ENCODE measurements at regions of chr10 and their contacts with region 1.

Region 1: DNA sequence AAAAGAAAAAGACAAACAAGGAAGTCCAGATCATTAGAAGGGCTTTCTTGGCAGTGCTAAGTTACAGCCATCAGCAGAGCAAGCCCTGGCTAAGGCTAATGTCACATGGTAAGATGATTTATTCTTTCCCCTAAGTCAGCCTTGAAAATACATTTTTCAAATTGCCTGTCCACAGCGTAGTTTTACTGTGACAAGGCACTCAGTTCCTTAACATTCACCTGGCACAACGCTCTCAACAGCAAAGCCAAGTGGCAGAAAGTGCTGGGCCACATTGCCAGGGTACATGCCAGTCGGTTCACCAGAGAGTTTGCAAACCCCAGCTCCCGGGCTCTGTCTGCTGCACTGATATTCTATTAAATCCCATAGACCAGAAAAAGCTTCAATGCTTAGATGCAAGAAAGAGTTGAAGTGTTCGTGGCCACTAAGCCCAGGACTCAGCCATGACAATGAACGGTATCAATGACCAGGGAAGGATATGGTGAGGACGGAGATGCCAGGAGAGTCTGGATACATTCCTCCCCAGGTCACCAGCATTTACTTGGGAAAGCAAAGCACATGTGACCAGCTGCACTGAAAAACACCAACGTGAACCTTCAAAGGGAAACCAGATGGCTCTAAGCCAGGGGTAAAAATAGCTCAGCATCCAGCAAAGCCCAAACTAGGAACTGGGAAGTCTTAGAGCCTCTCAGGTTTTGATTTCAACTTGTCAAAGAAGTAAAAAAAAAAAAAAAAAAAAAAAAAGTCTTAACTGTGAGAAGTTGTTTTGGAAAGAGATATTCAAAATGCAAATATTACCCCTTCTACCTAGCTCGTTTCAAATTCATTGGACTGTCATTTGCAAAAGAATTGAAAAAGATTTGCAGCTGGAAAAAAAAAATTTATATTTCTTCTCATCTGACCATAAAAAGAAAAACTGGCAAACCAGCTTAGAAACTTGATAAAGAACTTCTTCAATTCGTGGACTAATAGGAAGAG is 23.9 kb upstream of the MPP7 start:
- DNase-seq: peak; percentile 68
- H3K4me3 ChIP-seq: no peak overlapping the region
- H3K27ac ChIP-seq: no peak overlapping the region
- H3K4me1 ChIP-seq: peaks cover 8% of the 10 kb centered on the region
- H3K27me3 ChIP-seq: peaks cover 0 to under 1% of the 10 kb centered on the region in 2 experiments
- CTCF ChIP-seq: no peak
- POLR2A ChIP-seq: no peak

Region 2: DNA sequence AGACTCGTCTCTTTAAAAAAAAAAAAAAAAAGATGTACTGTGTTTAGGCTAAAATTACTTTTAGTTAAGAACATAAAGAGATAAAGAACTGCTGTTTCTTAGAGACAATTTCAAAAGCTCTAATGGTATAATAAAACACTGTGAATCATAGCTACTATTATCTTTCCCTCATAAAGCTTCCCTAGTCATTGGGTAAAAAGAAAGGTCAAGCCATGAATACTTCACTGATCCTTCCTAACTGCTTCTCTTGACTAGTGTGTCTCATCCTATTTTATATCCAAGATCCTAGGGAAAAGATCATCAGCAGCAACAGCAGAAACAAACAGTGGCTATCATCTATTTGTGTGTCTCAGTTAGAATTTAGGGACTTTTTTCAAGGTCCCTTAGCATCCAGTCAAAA is 1183.1 kb before region 1 on chr10:
- CTCF ChIA-PET with region 1: no interaction called
- POLR2A ChIA-PET with region 1: no interaction called
- dilution Hi-C with region 1: no loop called
- intact Hi-C with region 1: no loop called
- DNase-seq: no peak
- H3K4me3 ChIP-seq: no peak overlapping the region
- H3K27ac ChIP-seq: no peak overlapping the region
- H3K4me1 ChIP-seq: no peaks in the 10 kb centered on the region
- H3K27me3 ChIP-seq: no peaks in the 10 kb centered on the region
- CTCF ChIP-seq: no peak
- POLR2A ChIP-seq: no peak

Region 3: GRCh38 chr10:28302638-28303488 is 23.9 kb before region 1 on chr10 and contains the start of gene MPP7:
- CTCF ChIA-PET with region 1: interaction called, 7 read pairs
- POLR2A ChIA-PET with region 1: no interaction called
- dilution Hi-C with region 1: no loop called
- intact Hi-C with region 1: loop called (anchors 1 kb)
- DNase-seq: peak; percentile 98
- H3K4me3 ChIP-seq: peak within 1 kb of the TSS; percentile 56 to 78 (median 63)
- H3K27ac ChIP-seq: no peak within 1 kb of the TSS
- H3K4me1 ChIP-seq: peaks cover 6% of the 10 kb centered on the region
- H3K27me3 ChIP-seq: peaks cover 23 to 41% of the 10 kb centered on the region in 2 experiments
- CTCF ChIP-seq: no peak
- POLR2A ChIP-seq: no peak
- total RNA-seq, gene MPP7: 0.73 and 1.0 TPM in 2 replicates

Measured in endothelial cell of umbilical vein (primary cell).